ENCODE measurements at regions of chr1 and their contacts with region 1.

Region 1: GRCh38 chr1:161153679-161154426 is at the start of gene UFC1:
- H3K4me3 ChIP-seq: peak within 1 kb of the TSS; percentile 89
- H3K27ac ChIP-seq: peak within 1 kb of the TSS; percentile 70
- H3K4me1 ChIP-seq: no peaks in the 10 kb centered on the region
- CTCF ChIP-seq: no peak

Region 2: DNA sequence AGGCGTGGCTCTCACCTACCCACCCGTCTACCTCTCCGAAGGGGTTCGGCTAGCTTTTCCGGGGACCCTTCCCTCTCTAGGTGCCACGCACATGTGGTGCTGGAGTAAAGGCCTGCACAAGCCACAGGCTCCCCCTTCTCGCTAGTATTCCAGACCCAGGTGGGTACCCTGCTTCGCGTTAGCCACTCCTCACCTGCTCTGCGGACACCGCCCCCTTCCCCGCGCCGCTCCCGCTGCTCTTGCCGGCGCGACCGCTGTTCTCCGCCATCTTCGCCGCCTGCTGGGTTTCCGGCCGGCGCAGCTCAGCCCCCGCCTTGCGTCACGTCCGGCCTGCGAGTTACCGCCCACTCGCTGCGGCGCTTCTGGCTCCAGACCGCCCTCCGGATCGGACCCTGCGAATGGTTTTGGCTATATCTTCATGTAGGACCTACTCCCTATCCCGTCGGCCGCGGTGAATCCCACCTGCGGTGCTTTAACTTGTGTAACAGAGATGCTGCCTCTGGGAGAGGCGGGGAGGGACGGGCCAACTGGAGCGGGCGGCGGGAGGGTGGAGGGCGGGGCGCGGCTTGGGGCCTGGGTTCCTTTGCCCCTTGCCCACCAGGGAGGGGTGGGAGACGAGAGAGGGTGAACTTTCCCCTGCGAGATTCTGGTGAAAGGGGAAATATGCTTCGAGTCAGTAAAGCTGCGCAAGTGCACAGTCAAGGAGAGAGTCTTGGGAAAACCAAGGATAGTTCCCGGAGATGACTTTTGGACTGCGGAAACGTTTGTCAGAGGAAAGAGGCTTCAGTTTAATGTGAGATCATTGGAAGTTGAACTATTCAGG is 35.9 kb before region 1 on chr1 and contains the starts of genes NIT1 and PFDN2:
- CTCF ChIA-PET with region 1: interaction called, 3 read pairs
- POLR2A ChIA-PET with region 1: interaction called, 10 read pairs
- H3K4me3 ChIP-seq: peak within 1 kb of the TSS; percentile 89
- H3K27ac ChIP-seq: peak within 1 kb of the TSS; percentile 60
- H3K4me1 ChIP-seq: peaks cover 9% of the 10 kb centered on the region
- CTCF ChIP-seq: peak; percentile 77

Region 3: DNA sequence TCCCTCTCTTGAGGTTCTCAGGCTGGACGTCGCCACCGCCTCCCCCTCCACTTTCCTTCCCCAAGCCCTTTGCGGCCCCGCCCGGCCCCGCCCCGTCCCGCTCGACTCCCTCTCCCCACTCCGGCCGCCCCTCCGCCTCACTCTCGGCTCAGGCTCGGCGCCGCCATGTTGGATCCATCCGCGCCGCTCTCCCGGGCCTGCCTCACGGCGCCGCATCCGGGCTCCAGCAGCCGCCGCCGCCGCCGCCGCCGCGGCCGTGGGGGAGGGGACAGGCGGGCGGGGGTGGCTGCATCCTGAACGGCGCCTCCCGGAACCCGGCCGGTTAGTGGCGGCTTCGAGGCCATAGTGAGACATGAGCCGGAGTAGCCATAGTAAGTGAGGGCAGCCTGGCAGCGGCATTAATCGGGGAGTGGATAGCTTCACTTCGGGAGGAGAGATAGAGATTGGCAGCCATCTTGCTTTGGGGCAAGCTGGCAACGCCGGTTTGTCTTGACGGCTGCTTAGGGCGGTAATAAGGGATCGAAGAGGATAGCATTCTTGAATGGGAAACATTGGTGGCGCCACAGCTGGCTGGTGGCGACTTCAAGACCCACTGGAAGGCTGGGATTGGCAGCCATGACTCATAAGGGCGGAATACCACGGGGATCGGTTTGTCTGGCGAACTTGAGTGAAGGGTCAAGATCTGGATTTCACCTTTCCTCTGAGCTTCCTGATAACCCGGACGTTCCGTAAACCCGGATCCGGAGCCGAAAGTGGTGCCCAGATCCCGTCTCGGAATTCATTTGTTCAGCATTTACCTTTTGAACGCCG is 21.2 kb before region 1 on chr1 and contains the start of gene DEDD:
- CTCF ChIA-PET with region 1: no interaction called
- POLR2A ChIA-PET with region 1: interaction called, 14 read pairs
- H3K4me3 ChIP-seq: peak within 1 kb of the TSS; percentile 84
- H3K27ac ChIP-seq: peak within 1 kb of the TSS; percentile 91
- H3K4me1 ChIP-seq: 0 out of 2 replicates have a peak, but pooled peaks cover 2% of the 10 kb centered on the region
- CTCF ChIP-seq: peak; percentile 71; the same call in 1 of the 2 replicates

Measured in HEK293 (cell line).